MCF 10A (cell line): ENCODE measurements at regions of chr1 and their contacts with region 1.

Region 1: DNA sequence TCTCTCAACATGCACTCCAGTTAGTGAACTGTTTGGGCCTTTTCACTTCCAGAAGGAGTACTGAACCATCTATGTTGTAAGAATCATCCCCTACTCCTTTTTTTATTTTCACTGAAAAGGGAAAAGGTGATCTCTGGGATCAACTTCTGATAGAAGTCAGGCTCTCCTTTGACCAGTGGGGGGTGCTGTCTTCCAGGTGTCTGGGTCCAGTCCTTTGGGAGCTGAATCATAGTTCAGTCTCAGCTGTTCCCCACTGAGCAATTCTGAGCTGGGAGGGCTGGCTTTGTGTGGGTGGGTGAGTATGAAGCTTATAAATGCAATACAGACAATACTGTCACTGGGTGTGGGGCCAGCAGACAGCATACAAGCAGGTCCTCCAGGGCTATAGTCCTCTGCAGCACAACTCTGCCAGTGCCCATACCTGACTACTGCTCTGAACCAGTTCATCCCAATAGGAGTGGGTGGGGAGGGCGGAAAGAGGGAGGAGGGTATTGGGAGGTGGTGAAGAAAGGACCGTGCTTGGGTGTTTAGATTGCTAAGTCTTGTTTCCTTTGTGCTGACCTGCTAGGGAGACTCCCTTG is 12.5 kb upstream of the SARS1 start:
- DNase-seq: peak; percentile 93
- H3K4me3 Mint-ChIP-seq: no peak overlapping the region
- H3K27ac Mint-ChIP-seq: no peak overlapping the region
- H3K4me1 Mint-ChIP-seq: peaks cover 28% of the 10 kb centered on the region
- H3K27me3 Mint-ChIP-seq: no peaks in the 10 kb centered on the region
- CTCF ChIP-seq: peak; percentile 76

Region 2: GRCh38 chr1:109226078-109226445 is 24.8 kb after region 1 on chr1:
- CTCF ChIA-PET with region 1: interaction called, 12 read pairs
- POLR2A ChIA-PET with region 1: interaction called, 10 read pairs
- intact Hi-C with region 1: no loop called
- DNase-seq: peak; percentile 23
- H3K4me3 Mint-ChIP-seq: no peak overlapping the region
- H3K27ac Mint-ChIP-seq: peak overlapping the region; percentile 78
- H3K4me1 Mint-ChIP-seq: peaks cover 12% of the 10 kb centered on the region
- H3K27me3 Mint-ChIP-seq: no peaks in the 10 kb centered on the region
- CTCF ChIP-seq: no peak